Heart left ventricle (tissue), 16 donors: ENCODE measurements at regions of chr10 and their contacts with region 1.

Region 1: DNA sequence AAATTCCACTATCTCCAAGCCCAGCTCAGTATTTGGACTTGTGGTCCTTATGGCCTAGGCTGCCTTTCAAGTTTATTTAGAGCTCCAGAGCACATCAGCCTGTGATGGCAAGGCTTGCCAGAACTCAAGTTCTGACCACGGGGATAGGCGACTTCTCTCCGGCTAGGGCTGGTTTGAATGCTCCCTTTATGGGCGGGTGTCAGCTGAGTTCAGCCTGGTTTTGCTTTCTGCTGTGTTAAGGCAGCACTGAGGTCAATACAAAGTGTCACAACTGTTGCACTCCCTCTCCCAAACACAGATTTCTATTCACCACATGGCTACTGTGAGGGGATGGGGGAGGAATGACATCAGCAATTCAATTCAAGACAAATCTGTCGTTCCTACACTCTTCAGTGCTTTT is 318.1 kb upstream of the MYO3A start:
- DNase-seq: no peak
- ATAC-seq: no peak
- H3K4me3 ChIP-seq: no peak overlapping the region
- H3K27ac ChIP-seq: no peak overlapping the region
- H3K4me1 ChIP-seq: no peaks in the 10 kb centered on the region
- H3K27me3 ChIP-seq: no peaks in the 10 kb centered on the region
- CTCF ChIP-seq: no peak
- POLR2A ChIP-seq: no peak

Region 2: DNA sequence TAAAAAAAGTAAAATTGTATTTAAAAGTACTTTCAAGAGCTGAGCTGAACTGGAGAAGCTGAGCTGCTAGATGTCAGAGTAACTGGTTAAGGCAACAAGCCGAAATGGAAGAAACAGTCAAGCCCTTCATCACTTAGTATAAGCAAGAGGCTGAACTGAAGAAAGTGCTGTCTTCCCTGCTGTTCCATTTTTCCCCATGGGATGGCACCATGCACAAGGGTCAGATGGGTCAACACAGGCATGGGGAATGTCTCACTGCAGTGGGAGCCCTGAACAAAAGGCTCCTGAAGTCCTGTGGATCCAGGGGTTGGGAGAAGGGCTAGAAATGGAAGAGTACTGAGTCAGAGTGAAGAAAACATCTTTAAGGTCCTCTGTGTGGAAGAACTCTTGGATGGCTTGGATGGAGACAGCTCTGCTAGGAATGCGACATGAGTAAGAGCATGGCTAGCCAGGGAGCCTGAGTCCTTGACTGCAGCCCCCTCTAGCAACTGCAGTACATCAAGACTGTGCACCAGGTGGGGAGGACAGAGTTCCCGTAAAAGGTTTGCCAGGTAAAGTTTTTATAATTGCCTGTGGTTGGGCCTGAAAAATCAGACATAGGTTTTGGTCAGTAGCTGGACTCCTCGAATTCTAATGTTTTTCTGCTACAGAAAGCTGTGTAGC is 92.8 kb before region 1 on chr10:
- intact Hi-C with region 1: no loop called
- DNase-seq: no peak
- ATAC-seq: no peak
- H3K4me3 ChIP-seq: no peak overlapping the region
- H3K27ac ChIP-seq: no peak overlapping the region
- H3K4me1 ChIP-seq: no peaks in the 10 kb centered on the region
- H3K27me3 ChIP-seq: no peaks in the 10 kb centered on the region
- CTCF ChIP-seq: no peak
- POLR2A ChIP-seq: no peak

Region 3: DNA sequence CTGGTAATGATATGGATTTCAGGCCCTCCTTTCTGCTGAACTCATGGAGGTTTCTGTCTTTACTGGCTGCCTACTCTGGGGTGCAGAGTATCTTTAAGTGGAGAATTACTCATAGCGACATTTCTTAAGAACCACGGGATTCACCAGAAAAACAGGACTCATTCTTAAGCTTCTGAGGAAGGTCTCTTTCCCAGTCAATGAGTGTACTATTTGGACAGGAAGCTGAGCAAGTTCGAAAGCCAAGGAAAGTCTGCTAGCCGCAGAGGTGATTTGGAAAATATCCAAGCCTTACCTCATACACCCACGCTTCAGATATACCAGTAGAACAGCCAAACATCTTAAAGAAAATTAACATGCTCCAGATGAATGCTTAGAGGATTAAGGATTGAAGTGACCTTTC is 59.5 kb before region 1 on chr10:
- intact Hi-C with region 1: loop called in 1 of 10 experiments (anchors 10 kb)
- DNase-seq: no peak
- ATAC-seq: no peak
- H3K4me3 ChIP-seq: no peak overlapping the region
- H3K27ac ChIP-seq: no peak overlapping the region
- H3K4me1 ChIP-seq: no peaks in the 10 kb centered on the region
- H3K27me3 ChIP-seq: no peaks in the 10 kb centered on the region
- CTCF ChIP-seq: no peak
- POLR2A ChIP-seq: no peak

Region 4: GRCh38 chr10:25666276-25666675 is 50.4 kb after region 1 on chr10:
- intact Hi-C with region 1: no loop called
- DNase-seq: no peak
- ATAC-seq: no peak
- H3K4me3 ChIP-seq: no peak overlapping the region
- H3K27ac ChIP-seq: no peak overlapping the region
- H3K4me1 ChIP-seq: no peaks in the 10 kb centered on the region
- H3K27me3 ChIP-seq: no peaks in the 10 kb centered on the region
- CTCF ChIP-seq: no peak
- POLR2A ChIP-seq: no peak

Region 5: DNA sequence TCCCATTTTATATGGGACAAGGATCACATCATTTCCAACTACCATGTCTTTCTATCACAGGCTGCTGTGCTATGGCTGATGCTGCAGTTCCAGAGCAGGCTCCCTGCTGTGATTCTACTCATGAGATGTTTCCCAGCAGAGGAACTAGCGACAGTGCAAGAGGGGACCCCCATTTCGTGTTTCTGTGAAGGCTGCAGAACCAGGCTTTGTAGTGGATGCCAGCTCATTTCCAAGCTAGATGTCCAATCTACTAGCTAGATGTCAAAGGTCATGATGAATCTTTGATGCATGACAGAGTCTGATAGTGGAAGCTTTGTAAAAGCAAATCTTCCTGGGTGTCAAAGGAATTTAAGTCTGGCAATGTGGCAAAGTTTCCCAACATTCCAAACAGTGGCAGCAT is 296.9 kb after region 1 on chr10:
- intact Hi-C with region 1: no loop called
- DNase-seq: no peak
- ATAC-seq: no peak
- H3K4me3 ChIP-seq: no peak overlapping the region
- H3K27ac ChIP-seq: no peak overlapping the region
- H3K4me1 ChIP-seq: no peaks in the 10 kb centered on the region
- H3K27me3 ChIP-seq: peaks cover 0 to 4% (median 0%) of the 10 kb centered on the region in 9 donors
- CTCF ChIP-seq: no peak
- POLR2A ChIP-seq: no peak